Uterus (tissue), 4 donors: ENCODE measurements at regions of chr11 and their contacts with region 1.

Region 1: DNA sequence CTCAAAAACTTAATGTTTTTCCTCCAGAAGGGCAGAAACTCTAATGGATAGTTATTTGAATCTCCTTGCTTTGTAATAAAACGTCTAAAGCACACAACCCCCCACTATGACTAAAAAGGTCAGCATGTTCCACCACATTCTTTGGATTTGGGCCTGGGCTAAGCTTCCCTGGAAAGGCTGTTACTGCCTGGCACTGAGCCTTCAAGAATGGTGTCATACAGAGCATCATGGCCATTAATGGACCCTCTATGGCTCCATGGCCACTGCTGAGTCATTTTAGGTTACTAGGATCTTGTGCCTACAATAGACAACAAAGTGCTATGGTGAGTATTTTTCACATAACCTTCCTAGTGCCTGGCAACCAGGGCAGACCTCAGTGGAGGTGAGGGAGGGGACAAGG is 242.6 kb upstream of the FAT3 start:
- DNase-seq: peak; percentile 25 to 33
- H3K4me3 ChIP-seq: no peak overlapping the region
- H3K27ac ChIP-seq: peak overlapping the region in 1 of 2 donors; percentile 37
- H3K4me1 ChIP-seq: no peaks in the 10 kb centered on the region
- H3K27me3 ChIP-seq: no peaks in the 10 kb centered on the region
- CTCF ChIP-seq: no peak
- POLR2A ChIP-seq: no peak

Region 2: GRCh38 chr11:91435694-91436395 is 546.1 kb before region 1 on chr11:
- intact Hi-C with region 1: no loop called
- DNase-seq: no peak
- H3K4me3 ChIP-seq: no peak overlapping the region
- H3K27ac ChIP-seq: no peak overlapping the region
- H3K4me1 ChIP-seq: no peaks in the 10 kb centered on the region
- H3K27me3 ChIP-seq: no peaks in the 10 kb centered on the region
- CTCF ChIP-seq: no peak
- POLR2A ChIP-seq: no peak

Region 3: DNA sequence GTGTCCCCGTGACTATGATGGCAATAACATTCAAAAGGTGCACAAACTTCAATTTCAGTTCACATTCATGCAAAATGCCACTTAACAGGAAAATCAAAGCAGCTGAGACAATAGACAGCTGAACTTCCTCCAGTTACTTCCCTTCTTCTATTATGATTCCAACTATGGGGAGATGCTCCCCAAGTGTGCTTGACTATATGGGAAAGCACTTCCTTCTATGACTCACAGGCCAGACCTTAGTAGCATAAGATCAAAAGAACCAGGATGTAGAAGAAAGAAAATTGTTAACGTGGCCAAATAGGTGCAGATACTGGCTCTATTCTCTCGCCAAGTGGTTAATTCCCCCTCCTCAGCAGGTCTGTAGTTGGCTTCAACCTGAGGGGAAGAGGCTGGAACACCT is 234.8 kb after region 1 on chr11:
- intact Hi-C with region 1: loop called (anchors 5 kb)
- DNase-seq: no peak
- H3K4me3 ChIP-seq: no peak overlapping the region
- H3K27ac ChIP-seq: no peak overlapping the region
- H3K4me1 ChIP-seq: no peaks in the 10 kb centered on the region
- H3K27me3 ChIP-seq: peaks cover 0 to 7% of the 10 kb centered on the region in 2 donors
- CTCF ChIP-seq: no peak
- POLR2A ChIP-seq: no peak